ENCODE measurements at regions of chr10 and their contacts with region 1.

Region 1: GRCh38 chr10:61628875-61629513 is 33.7 kb upstream of the CABCOCO1 start:
- DNase-seq: peak in 1 of 10 donors; percentile 6
- H3K4me3 ChIP-seq: no peak overlapping the region
- H3K27ac ChIP-seq: peak overlapping the region in 55 of 59 donors; percentile 6 to 88 (median 72)
- H3K27me3 ChIP-seq: no peaks in the 10 kb centered on the region
- CTCF ChIP-seq: no peak

Region 2: GRCh38 chr10:61662794-61663259 is 33.8 kb after region 1 on chr10 and contains the start of gene CABCOCO1:
- intact Hi-C with region 1: loop called in 1 of 2 experiments (anchors 5 kb)
- DNase-seq: peak; percentile 19 to 86 (median 66)
- H3K4me3 ChIP-seq: peak within 1 kb of the TSS; percentile 49 to 83 (median 72)
- H3K27ac ChIP-seq: peak within 1 kb of the TSS in 54 of 59 donors; percentile 5 to 87 (median 69)
- H3K27me3 ChIP-seq: no peaks in the 10 kb centered on the region
- CTCF ChIP-seq: peak in 37 of 56 donors; percentile 4 to 55 (median 31)
- total RNA-seq, gene CABCOCO1: 0.83 to 15.3 (median 4.9) TPM

Region 3: DNA sequence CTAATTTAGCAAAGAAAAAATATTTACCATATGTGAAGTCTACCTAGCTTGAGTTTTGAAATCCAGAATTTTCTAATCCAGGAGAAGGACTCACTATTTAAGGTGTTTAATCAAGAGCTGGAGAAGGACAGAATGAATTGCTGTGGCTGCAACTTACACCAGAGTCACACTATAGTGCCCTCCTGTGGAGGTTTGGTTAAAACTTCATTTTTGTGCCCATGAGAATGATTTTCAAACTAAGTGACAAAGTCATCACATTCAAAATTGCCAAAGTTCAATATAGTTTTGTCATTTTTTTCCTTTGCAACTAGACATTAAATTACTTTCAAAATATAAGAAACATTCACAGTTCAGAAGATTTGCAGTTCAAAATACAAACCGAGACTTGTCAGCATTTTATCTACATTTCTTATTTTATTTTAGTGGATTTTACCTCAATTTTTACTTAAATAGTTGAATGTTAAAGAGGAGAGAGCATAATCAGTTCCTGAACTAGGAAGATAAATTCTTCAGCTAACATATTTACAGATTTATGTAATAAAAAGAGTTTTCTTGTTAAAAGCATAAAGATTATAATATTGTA is 104.5 kb after region 1 on chr10:
- intact Hi-C with region 1: loop called in 1 of 2 experiments (anchors 10 kb)
- DNase-seq: peak in 1 of 10 donors; percentile 17
- H3K4me3 ChIP-seq: no peak overlapping the region
- H3K27ac ChIP-seq: no peak overlapping the region
- H3K27me3 ChIP-seq: no peaks in the 10 kb centered on the region
- CTCF ChIP-seq: peak; percentile 50 to 84 (median 70)